ENCODE measurements at regions of chr18 and their contacts with region 1.

Region 1: DNA sequence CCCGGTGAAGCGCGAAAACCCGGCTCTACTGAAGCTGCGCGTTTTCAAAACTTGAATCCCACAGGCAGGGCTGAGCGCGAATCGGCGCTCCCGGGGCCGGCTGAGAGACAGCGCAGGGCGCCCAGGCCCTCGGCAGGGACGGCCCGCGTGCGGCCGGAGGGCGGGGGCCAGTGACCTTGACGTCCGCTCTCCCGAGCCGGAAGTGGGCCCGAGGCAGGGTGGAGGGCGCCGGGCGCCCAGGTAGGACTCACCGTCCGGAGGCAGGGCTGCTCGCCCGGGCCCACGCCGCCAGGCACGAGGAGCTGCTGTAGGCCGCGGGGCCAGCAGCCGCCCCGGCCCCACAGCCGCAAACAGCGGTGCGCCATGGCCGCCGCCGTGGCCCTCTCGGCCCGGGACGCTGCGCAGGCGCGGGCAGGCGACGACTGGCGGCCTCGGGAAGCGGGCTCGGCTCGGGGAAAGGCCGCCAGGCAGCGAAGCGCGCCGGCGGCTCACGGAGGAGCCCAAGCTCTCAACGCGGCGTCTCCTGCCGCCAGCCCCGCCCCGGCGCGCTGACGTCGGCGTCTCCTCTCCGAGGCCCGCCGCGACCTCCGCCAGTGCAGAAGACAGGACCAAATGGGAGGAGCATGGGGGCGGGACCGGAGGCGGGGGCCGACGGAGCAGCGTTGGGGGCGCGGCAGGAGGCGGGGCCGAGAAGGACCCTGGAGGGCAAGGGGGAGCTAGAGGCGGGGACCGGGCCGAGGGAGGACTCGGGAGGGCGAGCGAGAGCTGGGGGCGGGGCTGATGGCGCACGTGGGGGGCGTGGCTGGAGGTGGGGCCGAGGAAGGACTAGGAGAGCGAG is at the start of gene AFG3L2:
- DNase-seq: peak; percentile 100
- ATAC-seq: peak; percentile 79 to 80
- H3K4me3 ChIP-seq: peak within 1 kb of the TSS; percentile 64 to 94 (median 72)
- H3K27ac ChIP-seq: peak within 1 kb of the TSS; percentile 95 to 100 (median 97)
- H3K4me1 ChIP-seq: peaks cover 42 to 43% of the 10 kb centered on the region in 2 donors
- H3K27me3 ChIP-seq: no peaks in the 10 kb centered on the region
- CTCF ChIP-seq: peak in 2 of 5 experiments; percentile 6 to 21
- POLR2A ChIP-seq: peak; percentile 98 to 99
- total RNA-seq, gene AFG3L2: 102 to 166 (median 124) TPM

Region 2: DNA sequence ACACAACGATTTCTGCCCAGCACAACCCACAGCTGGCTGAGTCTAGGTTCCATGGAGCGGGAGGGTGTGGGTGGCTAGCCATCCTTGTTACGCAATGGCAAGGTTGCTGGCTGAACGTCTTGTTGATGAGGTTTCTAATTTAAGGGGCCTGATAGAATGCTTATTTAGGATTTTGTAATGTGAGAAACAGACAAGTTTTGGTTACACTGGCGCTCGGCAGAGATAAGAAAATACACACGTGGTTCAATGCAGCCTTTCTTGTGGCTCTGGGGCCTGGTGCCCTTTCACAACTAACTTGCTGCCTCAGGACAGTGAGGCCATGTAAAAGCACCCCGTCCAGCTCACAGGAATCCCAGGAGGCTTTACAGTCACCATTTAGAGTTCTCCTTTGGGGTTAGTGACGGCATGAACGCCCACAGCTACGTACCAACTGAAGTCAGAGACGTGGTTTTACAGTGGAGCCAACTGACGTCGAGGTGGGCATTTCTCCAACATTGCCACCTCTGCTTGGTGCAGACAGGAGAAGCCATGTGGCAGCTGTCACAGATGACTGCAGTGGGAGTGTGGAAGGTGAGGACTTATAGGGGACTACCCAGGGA is 1197.9 kb before region 1 on chr18:
- in situ Hi-C with region 1: no loop called
- intact Hi-C with region 1: loop called (anchors 5 kb)
- DNase-seq: peak; percentile 86 to 92
- ATAC-seq: peak; percentile 88
- H3K4me3 ChIP-seq: peak overlapping the region; percentile 13 to 32 (median 22)
- H3K27ac ChIP-seq: peak overlapping the region; percentile 88 to 94 (median 91)
- H3K4me1 ChIP-seq: peaks cover 45 to 48% of the 10 kb centered on the region in 2 donors
- H3K27me3 ChIP-seq: no peaks in the 10 kb centered on the region
- CTCF ChIP-seq: no peak
- POLR2A ChIP-seq: peak in 1 of 2 donors; percentile 41

Region 3: GRCh38 chr18:12308386-12309100 is 68.4 kb before region 1 on chr18:
- in situ Hi-C with region 1: no loop called
- intact Hi-C with region 1: loop called (anchors 1 kb)
- DNase-seq: peak; percentile 39 to 65
- ATAC-seq: peak; percentile 74 to 83
- H3K4me3 ChIP-seq: peak overlapping the region; percentile 62 to 73 (median 66)
- H3K27ac ChIP-seq: peak overlapping the region; percentile 72 to 87 (median 78)
- H3K4me1 ChIP-seq: peaks cover 6 to 18% of the 10 kb centered on the region in 2 donors
- H3K27me3 ChIP-seq: peaks cover 20 to 31% (median 22%) of the 10 kb centered on the region in 3 donors
- CTCF ChIP-seq: no peak
- POLR2A ChIP-seq: peak in 1 of 2 donors; percentile 51

Region 4: DNA sequence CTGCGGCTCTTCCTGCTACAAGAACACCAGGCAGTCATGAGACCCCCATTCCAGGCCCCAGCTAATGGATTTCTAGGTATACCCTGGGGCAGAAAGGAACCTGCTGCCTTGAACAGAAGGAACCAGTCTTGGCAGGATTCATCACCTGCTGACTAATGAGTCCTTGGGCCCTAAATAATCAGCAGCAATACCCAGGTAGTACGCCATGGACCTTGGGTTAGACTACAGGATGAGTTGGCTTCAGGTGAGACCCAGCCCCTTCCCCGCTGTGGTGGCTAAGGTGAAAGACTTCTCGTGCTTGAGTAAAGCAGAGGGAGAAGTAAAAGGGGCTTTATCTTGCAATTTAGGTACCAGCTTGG is 175.9 kb after region 1 on chr18:
- in situ Hi-C with region 1: no loop called
- intact Hi-C with region 1: loop called (anchors 10 kb)
- DNase-seq: peak; percentile 18 to 48
- ATAC-seq: peak; percentile 39 to 72
- H3K4me3 ChIP-seq: no peak overlapping the region
- H3K27ac ChIP-seq: peak overlapping the region; percentile 61 to 88 (median 78)
- H3K4me1 ChIP-seq: peaks cover 15 to 30% of the 10 kb centered on the region in 2 donors
- H3K27me3 ChIP-seq: no peaks in the 10 kb centered on the region
- CTCF ChIP-seq: no peak
- POLR2A ChIP-seq: no peak

Region 5: GRCh38 chr18:12702221-12703095 is 325.5 kb after region 1 on chr18 and contains the starts of genes CEP76 and PSMG2:
- in situ Hi-C with region 1: no loop called
- intact Hi-C with region 1: loop called (anchors 1 kb)
- DNase-seq: peak; percentile 76 to 87
- ATAC-seq: peak; percentile 95 to 96
- H3K4me3 ChIP-seq: peak within 1 kb of the TSS; percentile 72 to 99 (median 94)
- H3K27ac ChIP-seq: peak within 1 kb of the TSS; percentile 95 to 99 (median 98)
- H3K4me1 ChIP-seq: peaks cover 28 to 29% of the 10 kb centered on the region in 2 donors
- H3K27me3 ChIP-seq: no peaks in the 10 kb centered on the region
- CTCF ChIP-seq: peak in 2 of 5 experiments; percentile 6 to 16
- POLR2A ChIP-seq: peak; percentile 76 to 84
- total RNA-seq, gene CEP76: 5.4 to 9.1 (median 6.8) TPM
- total RNA-seq, gene PSMG2: 49.6 to 94.2 (median 63.4) TPM

Region 6: DNA sequence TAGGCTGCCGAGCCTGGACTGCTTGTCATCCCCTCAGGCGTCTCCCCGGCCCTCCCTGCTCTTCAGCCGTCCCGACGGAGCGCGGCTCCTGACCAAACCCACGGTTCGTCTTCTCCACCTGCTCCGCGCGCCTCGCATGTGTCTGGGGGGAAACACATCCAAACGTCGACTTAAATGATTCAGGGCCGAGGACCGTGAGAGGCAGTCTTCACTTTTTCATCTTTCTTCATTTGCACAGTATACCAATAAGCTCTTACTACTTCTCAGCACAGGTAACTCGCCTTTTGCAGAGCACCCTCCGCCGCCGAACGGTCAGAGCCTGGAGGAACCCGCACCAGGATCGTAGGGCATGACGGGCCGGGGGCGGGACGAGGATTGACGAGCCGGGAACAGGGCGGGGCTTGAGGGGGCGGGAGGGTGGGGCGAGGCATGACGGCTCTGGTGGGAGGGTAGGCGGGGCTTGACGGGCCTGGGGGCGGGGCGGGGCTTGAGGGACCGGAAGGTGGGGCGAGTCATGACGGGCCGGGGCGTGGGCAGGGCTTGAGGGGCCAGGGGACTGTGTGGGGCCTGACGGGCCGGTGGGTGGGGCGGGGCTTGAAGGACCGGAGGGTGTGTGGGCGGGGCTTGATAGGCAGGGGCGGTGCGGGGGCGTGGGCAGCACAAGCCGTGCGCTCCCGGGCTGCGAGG is 570.6 kb after region 1 on chr18 and contains the start of gene SEH1L:
- in situ Hi-C with region 1: loop called (anchors 10 to 25 kb)
- intact Hi-C with region 1: loop called (anchors 1 kb)
- DNase-seq: peak; percentile 99 to 100
- ATAC-seq: peak; percentile 84 to 89
- H3K4me3 ChIP-seq: peak within 1 kb of the TSS; percentile 80 to 97 (median 92)
- H3K27ac ChIP-seq: peak within 1 kb of the TSS; percentile 96 to 100 (median 99)
- H3K4me1 ChIP-seq: peaks cover 17 to 19% of the 10 kb centered on the region in 2 donors
- H3K27me3 ChIP-seq: no peaks in the 10 kb centered on the region
- CTCF ChIP-seq: no peak
- POLR2A ChIP-seq: no peak
- total RNA-seq, gene SEH1L: 19.8 to 29.9 (median 28.2) TPM

Region 7: DNA sequence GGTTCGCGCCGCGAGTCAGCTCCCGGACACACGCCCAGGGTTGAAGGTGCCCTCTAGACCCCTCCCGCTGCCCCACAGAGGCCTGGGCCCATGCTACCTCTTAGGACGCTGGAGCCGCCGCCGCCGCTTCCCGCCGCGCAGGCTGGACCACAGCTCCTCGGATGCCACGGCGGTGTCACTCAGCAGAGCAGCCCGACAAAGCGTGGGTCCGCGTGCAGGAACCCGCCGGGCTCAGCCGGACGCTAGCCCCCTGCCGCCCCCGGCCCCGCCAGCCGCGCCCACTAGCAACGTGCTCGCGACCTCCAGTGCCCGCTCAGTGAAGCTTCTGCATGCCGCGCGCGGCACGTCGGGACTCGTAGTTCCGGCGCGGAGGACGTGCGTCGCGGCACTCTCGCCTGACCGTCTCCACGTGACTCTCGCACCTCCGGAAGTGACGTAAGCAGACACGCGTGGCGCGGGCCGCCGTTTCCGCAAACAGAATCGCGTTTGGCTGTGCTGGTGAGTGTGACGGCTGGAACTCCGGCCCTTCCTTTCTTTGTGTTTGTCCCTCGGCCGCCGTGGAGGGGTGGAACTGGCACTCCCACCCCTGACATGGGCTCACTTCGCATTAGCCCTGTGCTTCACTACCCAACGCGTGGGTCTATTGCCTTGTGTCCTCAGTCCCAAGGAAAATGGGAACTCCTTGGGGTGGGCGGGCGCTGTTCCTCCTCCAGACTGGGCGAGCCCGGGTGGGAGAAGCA is 1349.5 kb after region 1 on chr18 and contains the starts of genes FAM210A and RNMT:
- in situ Hi-C with region 1: no loop called
- intact Hi-C with region 1: loop called (anchors 10 kb)
- DNase-seq: peak; percentile 93 to 94
- ATAC-seq: peak; percentile 93 to 96
- H3K4me3 ChIP-seq: peak within 1 kb of the TSS; percentile 74 to 88 (median 81)
- H3K27ac ChIP-seq: peak within 1 kb of the TSS; percentile 93 to 98 (median 96)
- H3K4me1 ChIP-seq: peaks cover 25 to 34% of the 10 kb centered on the region in 2 donors
- H3K27me3 ChIP-seq: no peaks in the 10 kb centered on the region
- CTCF ChIP-seq: peak in 1 of 5 experiments; percentile 22
- POLR2A ChIP-seq: peak; percentile 83 to 88
- total RNA-seq, gene FAM210A: 7.8 to 23.1 (median 16.3) TPM
- total RNA-seq, gene RNMT: 12.9 to 24.1 (median 18.6) TPM